PC-9 (cell line): ENCODE measurements at regions of chr15 and their contacts with region 1.

Region 1: DNA sequence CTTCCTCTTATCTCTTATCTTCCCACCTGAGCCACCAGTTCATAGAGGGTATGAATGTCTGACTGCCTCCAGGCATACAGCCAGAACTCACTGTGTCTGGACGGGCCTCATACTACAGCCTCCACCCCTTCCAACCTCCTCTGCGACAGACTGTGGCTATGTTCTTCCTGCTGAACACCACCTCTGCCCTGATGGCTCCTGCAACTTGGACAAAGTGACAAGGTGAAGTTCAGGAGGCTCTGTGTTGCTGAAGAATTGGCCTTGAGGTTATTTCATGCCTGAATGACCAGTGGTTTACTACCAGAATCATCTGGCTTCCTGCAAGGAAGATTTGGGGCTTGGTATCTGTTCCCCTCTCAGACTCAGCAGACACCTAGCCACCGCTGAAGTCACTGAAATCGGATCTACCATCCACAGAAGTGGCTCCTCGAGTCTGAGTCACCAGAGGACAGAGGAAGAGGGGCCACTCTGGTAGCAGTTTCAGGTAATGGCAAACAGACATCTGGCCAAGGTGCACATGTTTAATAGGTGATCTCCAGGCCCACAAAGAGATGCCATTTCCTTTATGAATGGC is 14.2 kb upstream of the ULK3 start:
- DNase-seq: peak; percentile 69 to 70
- H3K4me3 ChIP-seq: no peak overlapping the region
- H3K27ac ChIP-seq: peak overlapping the region; percentile 49
- H3K4me1 ChIP-seq: peaks cover 21% of the 10 kb centered on the region
- H3K27me3 ChIP-seq: no peaks in the 10 kb centered on the region
- CTCF ChIP-seq: no peak

Region 2: DNA sequence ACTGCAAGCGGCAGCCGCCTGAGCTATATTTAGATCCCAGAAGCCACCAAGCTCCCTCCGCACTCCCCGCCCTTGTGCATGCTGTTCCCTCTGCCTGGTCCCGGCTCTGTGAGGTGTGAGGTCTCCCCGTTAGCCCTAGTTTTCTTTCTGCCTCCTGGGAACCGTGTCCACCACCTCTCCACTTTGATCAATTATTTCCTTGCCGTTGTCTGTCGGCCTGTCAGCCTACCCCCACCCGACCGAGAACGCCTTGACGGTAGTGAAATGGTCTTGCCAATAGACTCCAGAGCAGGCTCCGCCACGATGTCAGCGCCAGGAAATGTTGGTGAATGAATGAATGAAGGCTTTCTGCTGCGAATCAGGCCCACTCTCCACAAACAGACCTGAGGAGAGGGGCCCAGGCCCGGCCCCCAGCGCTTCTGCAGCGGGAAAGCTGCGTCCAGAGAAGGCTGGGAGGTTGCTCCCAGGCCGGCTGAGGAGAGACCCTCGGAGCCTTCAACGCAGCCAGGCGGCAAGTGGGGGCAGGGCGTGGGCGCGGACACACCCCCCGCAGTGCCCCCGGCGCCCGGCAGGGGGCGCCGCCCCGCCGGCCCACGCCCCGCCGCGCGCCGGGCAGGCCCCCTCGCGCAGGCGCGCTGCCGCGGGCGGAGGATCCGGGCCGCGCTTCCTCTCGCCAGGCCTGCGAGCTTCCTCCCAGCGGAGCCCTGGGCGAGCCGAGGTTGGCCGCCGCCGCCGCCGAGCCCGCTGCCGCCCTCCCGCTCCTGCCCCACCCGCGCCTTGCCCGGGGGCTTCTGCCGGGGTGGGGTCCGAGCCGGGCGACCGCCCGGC is 75.5 kb before region 1 on chr15 and contains the start of gene CSK:
- CTCF ChIA-PET with region 1: no interaction called
- POLR2A ChIA-PET with region 1: no interaction called
- intact Hi-C with region 1: no loop called
- DNase-seq: peak in 1 of 2 experiments; percentile 77
- H3K4me3 ChIP-seq: peak within 1 kb of the TSS; percentile 95
- H3K27ac ChIP-seq: no peak within 1 kb of the TSS
- H3K4me1 ChIP-seq: peaks cover 20% of the 10 kb centered on the region
- H3K27me3 ChIP-seq: no peaks in the 10 kb centered on the region
- CTCF ChIP-seq: peak; percentile 65
- total RNA-seq, gene CSK: 78.3 TPM in 2 replicates

Region 3: GRCh38 chr15:74897300-74897701 is 40.1 kb after region 1 on chr15:
- CTCF ChIA-PET with region 1: interaction called, 9 read pairs
- POLR2A ChIA-PET with region 1: interaction called, 3 read pairs
- intact Hi-C with region 1: loop called (anchors 5 kb)
- DNase-seq: no peak
- H3K4me3 ChIP-seq: no peak overlapping the region
- H3K27ac ChIP-seq: no peak overlapping the region
- H3K4me1 ChIP-seq: peaks cover 17% of the 10 kb centered on the region
- H3K27me3 ChIP-seq: no peaks in the 10 kb centered on the region
- CTCF ChIP-seq: no peak